T-cell (primary cell): ENCODE measurements at regions of chr9 and their contacts with region 1.

Region 1: GRCh38 chr9:110180511-110181434 is 27.2 kb downstream of the C9orf152 start:
- DNase-seq: no peak
- ATAC-seq: no peak
- H3K4me3 ChIP-seq: no peak overlapping the region
- H3K4me3 Mint-ChIP-seq: no peak overlapping the region
- H3K27ac ChIP-seq: no peak overlapping the region
- H3K27ac Mint-ChIP-seq: no peak overlapping the region
- H3K4me1 ChIP-seq: no peaks in the 10 kb centered on the region
- H3K4me1 Mint-ChIP-seq: peaks cover 0 to 2% (median 0%) of the 10 kb centered on the region in 3 donors
- H3K27me3 ChIP-seq: no peaks in the 10 kb centered on the region
- H3K27me3 Mint-ChIP-seq: no peaks in the 10 kb centered on the region

Region 2: GRCh38 chr9:110152704-110153374 is 27.9 kb before region 1 on chr9:
- CTCF ChIA-PET with region 1: interaction called in 1 of 2 experiments, 10 read pairs
- POLR2A ChIA-PET with region 1: no interaction called
- DNase-seq: peak in 2 of 35 experiments; percentile 11 to 64
- ATAC-seq: no peak
- H3K4me3 ChIP-seq: no peak overlapping the region
- H3K4me3 Mint-ChIP-seq: no peak overlapping the region
- H3K27ac ChIP-seq: no peak overlapping the region
- H3K27ac Mint-ChIP-seq: no peak overlapping the region
- H3K4me1 ChIP-seq: peaks cover 30 to 55% of the 10 kb centered on the region in 2 experiments
- H3K4me1 Mint-ChIP-seq: peaks cover 71 to 88% (median 74%) of the 10 kb centered on the region in 3 donors
- H3K27me3 ChIP-seq: no peaks in the 10 kb centered on the region
- H3K27me3 Mint-ChIP-seq: no peaks in the 10 kb centered on the region